Mammary epithelial cell (primary cell): ENCODE measurements at regions of chr11 and their contacts with region 1.

Region 1: GRCh38 chr11:43172477-43172876 is 139.3 kb upstream of the API5 start:
- DNase-seq: no peak
- H3K4me3 ChIP-seq: no peak overlapping the region
- H3K27ac ChIP-seq: no peak overlapping the region
- H3K4me1 ChIP-seq: no peaks in the 10 kb centered on the region
- H3K27me3 ChIP-seq: no peaks in the 10 kb centered on the region
- CTCF ChIP-seq: no peak

Region 2: GRCh38 chr11:42974505-42975504 is 197.7 kb before region 1 on chr11:
- CTCF ChIA-PET with region 1: no interaction called
- dilution Hi-C with region 1: no loop called
- in situ Hi-C with region 1: no loop called
- intact Hi-C with region 1: no loop called
- DNase-seq: no peak
- H3K4me3 ChIP-seq: no peak overlapping the region
- H3K27ac ChIP-seq: no peak overlapping the region
- H3K4me1 ChIP-seq: no peaks in the 10 kb centered on the region
- H3K27me3 ChIP-seq: no peaks in the 10 kb centered on the region
- CTCF ChIP-seq: no peak

Region 3: GRCh38 chr11:43119275-43119960 is 53.1 kb before region 1 on chr11:
- CTCF ChIA-PET with region 1: no interaction called
- dilution Hi-C with region 1: loop called (anchors 10 kb)
- in situ Hi-C with region 1: no loop called
- intact Hi-C with region 1: no loop called
- DNase-seq: no peak
- H3K4me3 ChIP-seq: no peak overlapping the region
- H3K27ac ChIP-seq: no peak overlapping the region
- H3K4me1 ChIP-seq: no peaks in the 10 kb centered on the region
- H3K27me3 ChIP-seq: no peaks in the 10 kb centered on the region
- CTCF ChIP-seq: no peak

Region 4: DNA sequence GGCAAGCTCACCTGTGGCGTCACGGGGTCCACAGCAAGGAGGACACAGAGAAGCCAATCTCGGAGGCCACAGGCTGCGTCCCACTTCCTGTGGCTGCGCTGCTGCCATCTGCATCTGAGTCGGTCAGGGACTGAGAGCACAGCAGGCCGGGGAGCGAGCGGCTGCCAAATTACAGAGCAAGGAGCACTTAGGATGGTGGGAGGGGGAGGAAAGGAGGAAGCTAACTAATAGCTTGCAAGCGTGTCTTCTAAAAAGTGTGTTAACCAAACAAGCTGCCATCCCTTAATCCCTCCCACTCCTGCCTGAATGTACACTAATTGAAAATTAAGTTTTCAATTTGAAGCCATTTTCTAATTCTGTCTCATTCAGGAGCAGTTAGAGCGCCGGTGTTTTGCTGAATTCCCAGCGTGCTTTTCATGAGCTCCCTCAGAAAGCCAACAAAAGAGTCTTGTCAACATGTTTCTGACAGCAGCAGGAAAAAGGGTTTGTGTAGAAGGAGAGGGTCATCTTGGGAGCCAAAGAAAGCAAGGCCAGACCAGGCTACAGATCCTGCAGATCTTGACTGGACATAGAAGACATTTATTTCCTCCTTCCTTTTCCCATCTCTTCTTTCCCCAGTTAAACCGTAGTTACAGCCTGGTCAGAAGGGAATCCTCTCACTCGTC is 96.9 kb after region 1 on chr11:
- CTCF ChIA-PET with region 1: no interaction called
- dilution Hi-C with region 1: no loop called
- in situ Hi-C with region 1: no loop called
- intact Hi-C with region 1: no loop called
- DNase-seq: no peak
- H3K4me3 ChIP-seq: no peak overlapping the region
- H3K27ac ChIP-seq: no peak overlapping the region
- H3K4me1 ChIP-seq: no peaks in the 10 kb centered on the region
- H3K27me3 ChIP-seq: no peaks in the 10 kb centered on the region
- CTCF ChIP-seq: no peak

Region 5: DNA sequence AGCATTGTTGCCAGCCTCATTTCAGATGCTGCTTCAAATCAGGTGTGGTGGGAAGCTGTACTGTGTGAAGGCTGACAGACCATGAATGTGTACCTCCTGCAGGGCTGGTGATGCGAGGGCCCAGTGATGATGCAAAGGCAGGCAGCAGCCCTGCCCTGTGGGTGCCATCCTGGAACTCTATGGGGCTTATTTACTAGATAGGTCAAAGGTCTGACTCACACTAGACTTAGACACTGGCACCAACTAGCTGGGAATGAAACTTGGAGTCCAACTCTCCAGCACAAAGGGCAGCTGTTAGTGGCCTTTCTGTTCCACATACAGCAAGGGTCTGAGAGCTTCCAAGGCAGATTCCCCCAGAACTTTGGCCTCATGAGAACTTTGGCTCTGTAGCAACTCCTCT is 324.7 kb after region 1 on chr11:
- CTCF ChIA-PET with region 1: no interaction called
- dilution Hi-C with region 1: no loop called
- in situ Hi-C with region 1: no loop called
- intact Hi-C with region 1: no loop called
- DNase-seq: no peak
- H3K4me3 ChIP-seq: no peak overlapping the region
- H3K27ac ChIP-seq: no peak overlapping the region
- H3K4me1 ChIP-seq: no peaks in the 10 kb centered on the region
- H3K27me3 ChIP-seq: no peaks in the 10 kb centered on the region
- CTCF ChIP-seq: no peak